CD8-positive, alpha-beta T cell (primary cell): ENCODE measurements at regions of chr6 and their contacts with region 1.

Region 1: DNA sequence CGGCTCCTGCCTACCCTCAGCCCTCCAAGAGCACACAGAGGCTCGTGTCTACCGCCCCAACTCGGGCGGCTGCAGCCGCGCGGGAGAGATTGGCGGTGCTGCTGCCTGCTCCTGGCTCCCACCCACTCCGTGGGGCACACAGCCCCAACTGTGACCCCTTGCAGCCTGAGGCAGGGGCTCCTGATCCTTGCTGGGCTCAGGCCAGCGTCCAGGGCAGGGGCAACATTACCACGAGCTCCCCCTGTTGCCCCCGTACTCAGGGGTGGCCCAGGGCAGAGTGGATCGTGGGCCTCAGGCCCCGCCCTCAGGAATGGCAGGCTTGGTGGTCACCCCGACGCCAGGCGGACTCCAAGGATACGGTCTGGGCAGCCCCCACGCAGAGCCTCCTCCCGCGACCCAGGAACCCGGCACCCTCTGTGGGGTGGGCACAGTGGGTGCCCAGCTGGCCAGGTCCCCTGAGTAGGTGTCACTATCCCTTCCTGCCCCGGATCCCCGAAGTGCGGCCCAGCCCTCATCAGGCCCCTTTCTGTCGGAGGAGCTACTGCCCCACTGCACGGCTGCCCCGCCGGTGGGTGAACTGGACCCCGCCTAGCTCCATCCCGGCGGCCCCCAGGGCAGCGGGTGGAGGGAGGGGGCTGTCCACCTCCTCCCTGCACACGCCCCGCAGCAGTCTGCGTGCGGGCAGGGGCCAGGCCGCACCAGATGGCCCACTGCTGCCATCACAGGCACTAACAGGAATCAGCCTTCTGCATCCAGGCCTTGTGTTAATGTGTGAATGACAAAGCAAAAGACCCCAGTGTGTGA is 55.1 kb upstream of the UNC93A start:
- DNase-seq: no peak
- ATAC-seq: no peak
- H3K4me3 ChIP-seq: no peak overlapping the region
- H3K4me3 Mint-ChIP-seq: no peak overlapping the region
- H3K27ac ChIP-seq: no peak overlapping the region
- H3K27ac Mint-ChIP-seq: no peak overlapping the region
- H3K4me1 ChIP-seq: no peaks in the 10 kb centered on the region
- H3K4me1 Mint-ChIP-seq: no peaks in the 10 kb centered on the region
- H3K27me3 ChIP-seq: no peaks in the 10 kb centered on the region
- H3K27me3 Mint-ChIP-seq: peaks cover 14% of the 10 kb centered on the region
- CTCF ChIP-seq: no peak

Region 2: GRCh38 chr6:167275001-167275400 is 39.0 kb after region 1 on chr6:
- CTCF ChIA-PET with region 1: no interaction called
- POLR2A ChIA-PET with region 1: no interaction called
- intact Hi-C with region 1: loop called in 1 of 2 experiments (anchors 2 kb)
- DNase-seq: no peak
- ATAC-seq: no peak
- H3K4me3 ChIP-seq: no peak overlapping the region
- H3K4me3 Mint-ChIP-seq: no peak overlapping the region
- H3K27ac ChIP-seq: no peak overlapping the region
- H3K27ac Mint-ChIP-seq: no peak overlapping the region
- H3K4me1 ChIP-seq: no peaks in the 10 kb centered on the region
- H3K4me1 Mint-ChIP-seq: no peaks in the 10 kb centered on the region
- H3K27me3 ChIP-seq: peaks cover 0 to 3% of the 10 kb centered on the region in 2 experiments
- H3K27me3 Mint-ChIP-seq: peaks cover 20% of the 10 kb centered on the region
- CTCF ChIP-seq: no peak